Panc1 (cell line): ENCODE measurements at regions of chr2 and their contacts with region 1.

Region 1: DNA sequence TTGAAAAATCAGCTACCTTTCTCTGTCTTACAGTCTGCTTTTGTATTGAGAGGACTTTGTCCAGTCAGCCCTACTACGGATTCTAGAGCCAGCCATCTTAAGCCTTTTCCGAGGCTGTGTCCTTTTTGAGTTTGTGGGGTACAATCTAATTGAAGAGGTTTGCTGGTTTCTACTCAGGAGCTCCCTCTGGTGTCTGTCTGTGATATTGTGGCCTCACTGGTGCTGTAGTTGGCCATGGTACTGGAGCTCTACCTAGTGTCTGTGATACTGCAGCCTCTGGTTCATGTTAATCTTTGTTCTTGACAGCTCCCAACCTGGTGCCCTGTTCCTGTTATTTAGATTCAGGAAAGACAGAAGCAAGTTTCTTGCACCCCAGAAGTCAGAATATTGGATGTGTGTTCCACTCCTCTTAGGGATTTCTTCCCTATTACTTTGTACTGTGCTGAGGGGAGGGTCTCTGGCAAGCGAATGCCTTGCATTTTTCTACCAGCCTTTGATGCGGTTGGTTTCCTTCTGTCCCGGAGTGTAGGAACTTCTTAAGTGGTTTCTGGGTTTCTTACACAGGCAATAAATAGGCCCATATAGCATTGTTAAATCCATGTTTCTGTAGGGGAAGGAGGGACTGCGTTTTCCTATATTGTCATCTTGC is 78.5 kb downstream of the ACSL3 start:
- DNase-seq: peak; percentile 60
- ATAC-seq: peak; percentile 97
- H3K4me3 ChIP-seq: no peak overlapping the region
- H3K27ac ChIP-seq: no peak overlapping the region
- H3K4me1 ChIP-seq: no peaks in the 10 kb centered on the region
- H3K27me3 ChIP-seq: no peaks in the 10 kb centered on the region
- CTCF ChIP-seq: peak; percentile 93

Region 2: GRCh38 chr2:222690564-222691200 is 248.7 kb before region 1 on chr2:
- CTCF ChIA-PET with region 1: no interaction called
- POLR2A ChIA-PET with region 1: no interaction called
- in situ Hi-C with region 1: no loop called
- intact Hi-C with region 1: loop called (anchors 10 kb)
- DNase-seq: peak; percentile 55
- ATAC-seq: peak; percentile 94
- H3K4me3 ChIP-seq: no peak overlapping the region
- H3K27ac ChIP-seq: no peak overlapping the region
- H3K4me1 ChIP-seq: no peaks in the 10 kb centered on the region
- H3K27me3 ChIP-seq: no peaks in the 10 kb centered on the region; the same call in 1 of the 2 replicates
- CTCF ChIP-seq: peak; percentile 99